CD4-positive, alpha-beta T cell (primary cell): ENCODE measurements at regions of chr5 and their contacts with region 1.

Region 1: DNA sequence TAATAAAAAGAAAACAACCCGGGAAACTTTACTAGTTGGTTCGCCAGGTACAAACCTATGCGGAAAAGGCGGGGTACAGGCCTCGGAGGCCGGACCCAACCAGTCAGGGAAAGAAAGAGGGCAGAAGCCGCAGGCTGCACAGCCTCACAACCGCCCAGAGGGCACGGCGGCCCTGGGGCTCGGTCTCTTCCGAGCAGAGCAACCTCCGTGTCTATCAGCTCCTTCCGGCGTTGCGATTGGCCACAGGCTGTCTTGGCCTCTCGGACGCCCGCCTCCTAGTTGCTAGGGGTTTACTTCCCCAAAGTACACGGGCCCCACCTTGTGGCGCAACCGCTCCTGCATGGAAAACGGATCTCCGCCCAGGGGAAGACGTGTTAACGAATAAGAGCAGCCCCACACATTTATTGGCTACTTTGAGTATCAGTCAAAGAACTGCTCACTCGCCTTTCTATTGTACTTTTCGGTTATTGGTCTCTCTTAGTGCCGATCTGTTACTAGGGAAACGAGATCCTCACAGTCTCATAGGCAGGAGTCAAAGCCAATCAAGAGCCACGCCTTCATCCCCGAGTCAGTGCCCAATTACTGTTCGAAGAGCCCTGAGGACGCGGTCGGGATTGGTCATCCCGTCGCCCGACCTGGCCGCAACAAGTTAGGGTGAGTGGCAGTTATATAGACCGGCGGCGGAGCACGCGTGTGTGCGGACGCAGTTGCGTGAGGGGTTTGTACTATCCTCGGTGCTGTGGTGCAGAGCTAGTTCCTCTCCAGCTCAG is at the start of gene G3BP1:
- DNase-seq: peak; percentile 97 to 100 (median 99)
- ATAC-seq: peak; percentile 76
- H3K4me3 ChIP-seq: peak within 1 kb of the TSS; percentile 88
- H3K4me3 Mint-ChIP-seq: peak within 1 kb of the TSS; percentile 90
- H3K27ac ChIP-seq: peak within 1 kb of the TSS; percentile 86 to 90
- H3K27ac Mint-ChIP-seq: no peak within 1 kb of the TSS
- H3K4me1 ChIP-seq: peaks cover 31% of the 10 kb centered on the region
- H3K4me1 Mint-ChIP-seq: peaks cover 47% of the 10 kb centered on the region
- H3K27me3 ChIP-seq: no peaks in the 10 kb centered on the region
- H3K27me3 Mint-ChIP-seq: no peaks in the 10 kb centered on the region
- CTCF ChIP-seq: peak; percentile 45
- total RNA-seq, gene G3BP1: 82.3 to 83.9 TPM

Region 2: DNA sequence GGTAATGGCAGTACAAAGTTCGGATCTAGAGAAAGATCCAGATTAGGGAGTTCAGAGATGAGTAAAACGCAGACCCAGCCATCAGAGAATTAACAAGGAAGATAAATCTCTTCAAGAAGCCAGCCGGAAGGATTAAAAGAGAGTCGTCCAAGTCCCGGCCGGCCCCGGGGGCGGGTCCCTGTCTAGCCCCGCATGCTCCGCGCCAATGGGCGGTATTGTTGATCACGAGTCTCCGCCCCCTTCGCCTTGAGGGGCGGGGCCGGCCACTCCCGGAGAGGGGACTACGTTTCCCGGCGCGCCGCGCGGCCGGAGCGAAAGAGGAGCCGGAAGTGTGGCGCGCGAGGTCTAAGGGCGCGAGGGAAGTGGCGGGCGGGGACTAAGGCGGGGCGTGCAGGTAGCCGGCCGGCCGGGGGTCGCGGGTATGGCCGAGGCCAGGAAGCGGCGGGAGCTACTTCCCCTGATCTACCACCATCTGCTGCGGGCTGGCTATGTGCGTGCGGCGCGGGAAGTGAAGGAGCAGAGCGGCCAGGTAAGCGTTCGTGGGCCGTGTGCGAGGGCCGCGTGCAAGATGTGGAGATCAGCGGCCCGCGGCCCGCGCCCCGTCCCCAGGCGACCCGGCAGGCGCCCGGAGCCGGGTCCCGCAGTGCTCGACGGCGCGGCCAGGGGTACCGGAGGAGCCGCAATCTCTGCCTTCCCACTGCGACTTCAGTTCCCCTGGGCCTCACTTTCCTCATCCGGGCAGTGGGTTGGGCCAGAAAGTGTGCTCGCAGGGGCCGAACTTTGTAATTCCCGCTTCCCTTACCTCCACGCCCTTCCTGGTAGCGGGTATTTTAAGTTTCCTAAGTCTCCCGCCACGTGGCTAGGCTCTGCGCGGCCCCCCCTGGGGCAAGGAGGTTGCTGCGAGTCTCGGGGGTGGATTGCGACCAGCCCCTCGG is 1413.9 kb before region 1 on chr5 and contains the start of gene TCOF1:
- CTCF ChIA-PET with region 1: no interaction called
- POLR2A ChIA-PET with region 1: no interaction called
- intact Hi-C with region 1: loop called (anchors 5 kb)
- DNase-seq: peak; percentile 93 to 98 (median 97)
- ATAC-seq: peak; percentile 98
- H3K4me3 ChIP-seq: peak within 1 kb of the TSS; percentile 86
- H3K4me3 Mint-ChIP-seq: peak within 1 kb of the TSS; percentile 89
- H3K27ac ChIP-seq: peak within 1 kb of the TSS in 1 of 2 donors; percentile 46
- H3K27ac Mint-ChIP-seq: peak within 1 kb of the TSS; percentile 73
- H3K4me1 ChIP-seq: peaks cover 28% of the 10 kb centered on the region
- H3K4me1 Mint-ChIP-seq: peaks cover 47% of the 10 kb centered on the region
- H3K27me3 ChIP-seq: no peaks in the 10 kb centered on the region
- H3K27me3 Mint-ChIP-seq: no peaks in the 10 kb centered on the region
- CTCF ChIP-seq: no peak
- total RNA-seq, gene TCOF1: 40.4 to 43.2 TPM

Region 3: DNA sequence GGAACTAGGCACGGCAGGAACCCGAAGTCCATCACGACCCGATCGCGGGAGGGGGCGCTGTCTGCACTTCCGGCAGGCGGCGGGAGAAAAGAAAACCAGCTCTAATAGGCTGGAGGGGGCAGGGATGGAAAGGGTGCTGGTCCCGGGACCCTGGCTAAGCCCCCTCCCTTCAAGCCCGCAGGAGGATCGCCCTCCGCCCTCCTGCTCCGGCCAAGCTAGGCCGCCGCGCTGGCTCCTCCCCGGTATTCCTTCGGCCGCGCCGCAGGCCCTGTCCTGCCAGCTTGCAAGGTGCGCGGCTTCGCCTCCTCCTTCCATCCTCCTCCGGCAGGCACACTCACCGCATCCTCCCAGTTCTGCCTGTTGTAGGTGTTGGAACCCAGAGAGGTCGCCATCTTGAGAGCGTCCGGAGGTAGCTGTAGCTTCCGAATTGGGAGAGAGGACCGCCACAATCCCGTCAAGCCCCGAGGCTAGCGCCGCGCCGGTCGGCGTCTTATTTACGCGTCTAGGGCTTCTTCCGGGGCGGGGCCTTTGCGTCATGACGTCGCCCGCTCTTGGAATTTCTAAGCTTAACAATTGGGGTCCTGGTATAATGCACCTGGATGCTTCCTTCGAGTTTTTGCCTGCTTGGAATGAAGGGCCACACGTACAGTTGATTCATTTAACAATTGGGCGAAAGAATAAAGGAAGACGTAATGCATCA is 1070.7 kb before region 1 on chr5 and contains the start of gene RBM22:
- CTCF ChIA-PET with region 1: no interaction called
- POLR2A ChIA-PET with region 1: interaction called, 12 read pairs
- intact Hi-C with region 1: no loop called
- DNase-seq: peak; percentile 84 to 96 (median 90)
- ATAC-seq: peak; percentile 89
- H3K4me3 ChIP-seq: peak within 1 kb of the TSS; percentile 83
- H3K4me3 Mint-ChIP-seq: no peak within 1 kb of the TSS
- H3K27ac ChIP-seq: peak within 1 kb of the TSS; percentile 95 to 98
- H3K27ac Mint-ChIP-seq: no peak within 1 kb of the TSS
- H3K4me1 ChIP-seq: peaks cover 6% of the 10 kb centered on the region
- H3K4me1 Mint-ChIP-seq: no peaks in the 10 kb centered on the region
- H3K27me3 ChIP-seq: no peaks in the 10 kb centered on the region
- H3K27me3 Mint-ChIP-seq: no peaks in the 10 kb centered on the region
- CTCF ChIP-seq: peak; percentile 75
- total RNA-seq, gene RBM22: 98.2 to 101 TPM

Region 4: DNA sequence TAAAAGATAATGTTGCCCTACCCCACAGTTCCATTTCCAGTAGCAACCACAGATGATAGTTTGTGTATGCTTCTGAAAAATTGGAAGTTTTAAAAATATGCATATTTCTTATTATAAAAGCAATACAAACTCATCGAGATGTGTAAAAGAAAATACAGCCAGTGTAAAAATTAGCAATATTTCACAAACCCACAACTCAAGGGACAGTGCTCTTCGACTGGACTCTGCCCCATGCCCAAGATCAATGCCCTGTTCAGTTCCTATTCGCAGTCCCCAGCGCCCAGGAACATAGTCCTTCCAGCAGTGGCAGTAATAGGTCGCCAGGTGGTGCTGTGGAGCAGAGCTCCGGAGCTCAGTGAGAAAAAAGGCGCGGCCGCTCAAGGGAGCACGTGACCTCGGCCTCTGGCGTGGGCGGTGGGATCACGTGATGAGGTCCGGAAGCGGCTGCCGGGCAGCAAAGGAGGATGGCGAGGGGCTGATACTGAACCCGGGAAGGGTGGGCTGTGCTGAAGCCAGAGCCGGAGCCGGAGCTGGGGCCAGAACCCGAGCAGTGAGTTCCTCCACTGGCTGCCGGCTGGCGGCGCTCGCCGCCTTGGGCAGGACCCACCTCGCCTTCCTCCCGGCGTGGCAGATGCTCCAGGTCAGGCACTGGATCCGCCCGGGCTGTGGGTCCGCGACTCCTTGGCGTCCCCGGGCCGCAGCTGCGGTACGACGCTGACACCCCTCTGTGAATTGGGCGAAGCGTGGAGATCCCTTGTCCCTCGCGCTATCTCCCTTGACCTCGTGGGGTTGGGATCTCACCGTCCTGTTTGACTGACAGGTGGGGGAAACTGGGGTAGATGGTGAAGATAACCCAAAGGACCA is 324.0 kb before region 1 on chr5 and contains the start of gene SLC36A1:
- CTCF ChIA-PET with region 1: interaction called, 5 read pairs
- POLR2A ChIA-PET with region 1: interaction called, 22 read pairs
- intact Hi-C with region 1: loop called in 1 of 2 experiments (anchors 5 kb)
- DNase-seq: peak; percentile 82 to 95 (median 88)
- ATAC-seq: peak; percentile 97
- H3K4me3 ChIP-seq: peak within 1 kb of the TSS; percentile 93
- H3K4me3 Mint-ChIP-seq: peak within 1 kb of the TSS; percentile 98
- H3K27ac ChIP-seq: peak within 1 kb of the TSS in 1 of 2 donors; percentile 47
- H3K27ac Mint-ChIP-seq: peak within 1 kb of the TSS; percentile 68
- H3K4me1 ChIP-seq: peaks cover 18% of the 10 kb centered on the region
- H3K4me1 Mint-ChIP-seq: peaks cover 23% of the 10 kb centered on the region
- H3K27me3 ChIP-seq: peaks cover 0 to 9% of the 10 kb centered on the region in 2 experiments
- H3K27me3 Mint-ChIP-seq: peaks cover 33% of the 10 kb centered on the region
- CTCF ChIP-seq: peak; percentile 90
- total RNA-seq, gene SLC36A1: 2.2 to 2.8 TPM

Region 5: GRCh38 chr5:151740336-151740942 is 31.0 kb before region 1 on chr5:
- CTCF ChIA-PET with region 1: interaction called, 9 read pairs
- POLR2A ChIA-PET with region 1: interaction called, 10 read pairs
- intact Hi-C with region 1: no loop called
- DNase-seq: peak in 10 of 14 experiments; percentile 16 to 79 (median 32)
- ATAC-seq: peak; percentile 82
- H3K4me3 ChIP-seq: no peak overlapping the region
- H3K4me3 Mint-ChIP-seq: no peak overlapping the region
- H3K27ac ChIP-seq: no peak overlapping the region
- H3K27ac Mint-ChIP-seq: no peak overlapping the region
- H3K4me1 ChIP-seq: peaks cover 17% of the 10 kb centered on the region
- H3K4me1 Mint-ChIP-seq: peaks cover 15% of the 10 kb centered on the region
- H3K27me3 ChIP-seq: no peaks in the 10 kb centered on the region
- H3K27me3 Mint-ChIP-seq: no peaks in the 10 kb centered on the region
- CTCF ChIP-seq: peak; percentile 89

Region 6: GRCh38 chr5:151758430-151759241 is 12.8 kb before region 1 on chr5 and contains the start of gene ATOX1:
- CTCF ChIA-PET with region 1: interaction called, 10 read pairs
- POLR2A ChIA-PET with region 1: interaction called, 160 read pairs
- intact Hi-C with region 1: loop called (anchors 1 kb)
- DNase-seq: peak; percentile 84 to 96 (median 89)
- ATAC-seq: peak; percentile 98
- H3K4me3 ChIP-seq: peak within 1 kb of the TSS; percentile 95
- H3K4me3 Mint-ChIP-seq: peak within 1 kb of the TSS; percentile 97
- H3K27ac ChIP-seq: peak within 1 kb of the TSS; percentile 55 to 68
- H3K27ac Mint-ChIP-seq: peak within 1 kb of the TSS; percentile 95
- H3K4me1 ChIP-seq: peaks cover 39% of the 10 kb centered on the region
- H3K4me1 Mint-ChIP-seq: peaks cover 47% of the 10 kb centered on the region
- H3K27me3 ChIP-seq: no peaks in the 10 kb centered on the region
- H3K27me3 Mint-ChIP-seq: no peaks in the 10 kb centered on the region
- CTCF ChIP-seq: no peak
- total RNA-seq, gene ATOX1: 11.2 to 13.3 TPM